ENCODE measurements at regions of chr1 and their contacts with region 1.

Region 1: GRCh38 chr1:160251687-160252526 is 10.4 kb downstream of the DCAF8 start:
- DNase-seq: peak; percentile 48
- H3K4me3 ChIP-seq: no peak overlapping the region
- H3K27ac ChIP-seq: peak overlapping the region; percentile 56
- H3K4me1 ChIP-seq: peaks cover 62% of the 10 kb centered on the region
- H3K27me3 ChIP-seq: no peaks in the 10 kb centered on the region
- CTCF ChIP-seq: peak; percentile 79

Region 2: GRCh38 chr1:160085686-160086455 is 166.0 kb before region 1 on chr1:
- intact Hi-C with region 1: no loop called
- DNase-seq: peak; percentile 84
- H3K4me3 ChIP-seq: no peak overlapping the region
- H3K27ac ChIP-seq: peak overlapping the region; percentile 55
- H3K4me1 ChIP-seq: peaks cover 10% of the 10 kb centered on the region
- H3K27me3 ChIP-seq: peaks cover 37% of the 10 kb centered on the region
- CTCF ChIP-seq: peak; percentile 91

Region 3: DNA sequence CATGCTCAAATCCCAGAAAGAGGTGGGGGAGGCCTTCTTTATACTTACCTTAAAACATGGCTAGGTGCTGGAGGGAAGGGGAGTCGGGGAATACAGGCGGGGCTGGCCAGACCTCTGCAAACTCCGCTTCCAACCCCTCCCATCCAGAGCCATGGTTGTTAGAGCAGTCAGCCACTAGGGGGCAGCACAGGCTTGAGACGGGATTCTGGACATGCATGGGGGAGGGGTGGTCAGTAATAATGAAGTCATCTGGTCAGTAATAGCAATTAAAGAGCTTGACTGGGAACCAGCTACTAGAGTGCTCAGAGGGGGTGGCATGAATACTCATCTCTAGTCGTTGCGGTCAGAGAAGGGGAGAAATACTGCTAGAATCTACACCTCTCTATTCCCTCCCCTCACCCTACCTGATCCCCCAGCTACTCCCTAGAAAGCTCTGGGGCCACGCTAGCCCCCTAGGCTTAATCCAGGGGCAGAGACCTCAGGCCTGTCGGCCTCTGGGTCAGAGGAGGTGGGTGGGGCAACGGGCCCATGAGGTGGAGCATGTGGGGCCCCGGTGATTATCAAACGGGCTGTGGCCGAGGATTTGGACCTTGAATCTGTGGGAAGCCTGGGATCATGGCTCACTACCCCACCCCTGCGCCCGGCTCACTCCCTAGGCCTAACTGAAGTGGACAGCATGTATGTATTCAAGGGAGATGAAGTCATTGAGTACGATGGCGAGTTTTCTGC is 58.7 kb before region 1 on chr1:
- intact Hi-C with region 1: loop called (anchors 10 kb)
- DNase-seq: peak; percentile 82
- H3K4me3 ChIP-seq: peak overlapping the region; percentile 23
- H3K27ac ChIP-seq: peak overlapping the region; percentile 69
- H3K4me1 ChIP-seq: peaks cover 48% of the 10 kb centered on the region
- H3K27me3 ChIP-seq: no peaks in the 10 kb centered on the region
- CTCF ChIP-seq: peak; percentile 97

Region 4: DNA sequence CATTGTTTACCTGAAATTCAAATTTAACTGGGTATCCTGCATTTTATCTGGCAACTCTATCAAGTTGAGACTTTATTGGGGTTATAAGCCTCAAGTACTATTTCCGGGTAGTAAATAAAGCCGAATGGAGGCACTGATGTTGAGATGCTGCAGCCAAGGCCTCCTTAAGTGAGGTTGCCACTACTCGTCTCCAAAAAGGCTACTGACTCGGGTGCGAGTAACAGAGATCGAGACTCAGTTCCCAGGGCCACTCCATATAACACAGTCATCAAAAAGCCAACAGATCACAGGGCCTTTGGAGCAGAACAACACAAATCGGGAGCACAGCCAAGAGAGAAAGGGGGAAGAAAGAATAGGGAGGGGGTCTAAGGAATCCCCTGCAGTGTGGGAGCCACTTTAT is 90.6 kb after region 1 on chr1:
- intact Hi-C with region 1: no loop called
- DNase-seq: no peak
- H3K4me3 ChIP-seq: peak overlapping the region; percentile 96
- H3K27ac ChIP-seq: peak overlapping the region; percentile 91
- H3K4me1 ChIP-seq: peaks cover 73% of the 10 kb centered on the region
- H3K27me3 ChIP-seq: no peaks in the 10 kb centered on the region
- CTCF ChIP-seq: no peak